ENCODE measurements at regions of chr5 and their contacts with region 1.

Region 1: DNA sequence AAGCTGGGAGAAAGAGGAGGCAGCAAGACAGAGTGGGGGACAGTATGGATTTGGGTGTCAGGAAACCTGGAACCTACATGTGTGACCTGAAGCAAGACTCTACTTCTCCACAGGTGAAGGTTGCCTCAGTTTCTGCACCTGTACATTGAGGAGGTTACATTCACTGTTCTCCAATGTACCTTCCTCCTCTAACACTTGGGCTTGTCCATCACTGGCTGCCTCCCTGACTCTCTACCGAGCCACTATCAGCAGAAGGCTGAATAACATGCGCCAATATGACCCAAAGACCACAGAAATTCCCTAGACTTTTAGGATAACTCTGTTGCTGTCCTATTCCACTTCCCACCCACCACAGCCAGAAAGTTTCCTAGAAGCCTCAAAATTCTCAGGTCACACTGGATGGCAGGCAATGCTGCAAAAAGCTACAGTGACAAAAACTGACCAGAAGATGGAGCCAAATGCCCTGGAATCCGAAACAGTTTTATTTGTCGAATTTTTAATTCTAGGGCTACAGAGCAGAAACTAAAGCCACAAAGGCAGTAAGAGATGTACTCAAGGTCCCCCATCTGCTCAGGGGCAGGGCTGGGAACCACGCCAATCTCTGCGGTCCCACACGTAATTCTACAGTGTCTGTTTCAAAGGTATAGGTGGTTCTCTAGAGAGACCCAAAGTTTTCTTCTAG is 64.4 kb downstream of the FAM114A2 start:
- H3K4me3 ChIP-seq: no peak overlapping the region
- H3K27ac ChIP-seq: no peak overlapping the region
- H3K4me1 ChIP-seq: no peaks in the 10 kb centered on the region
- CTCF ChIP-seq: peak; percentile 37; the same call in 1 of the 2 replicates

Region 2: DNA sequence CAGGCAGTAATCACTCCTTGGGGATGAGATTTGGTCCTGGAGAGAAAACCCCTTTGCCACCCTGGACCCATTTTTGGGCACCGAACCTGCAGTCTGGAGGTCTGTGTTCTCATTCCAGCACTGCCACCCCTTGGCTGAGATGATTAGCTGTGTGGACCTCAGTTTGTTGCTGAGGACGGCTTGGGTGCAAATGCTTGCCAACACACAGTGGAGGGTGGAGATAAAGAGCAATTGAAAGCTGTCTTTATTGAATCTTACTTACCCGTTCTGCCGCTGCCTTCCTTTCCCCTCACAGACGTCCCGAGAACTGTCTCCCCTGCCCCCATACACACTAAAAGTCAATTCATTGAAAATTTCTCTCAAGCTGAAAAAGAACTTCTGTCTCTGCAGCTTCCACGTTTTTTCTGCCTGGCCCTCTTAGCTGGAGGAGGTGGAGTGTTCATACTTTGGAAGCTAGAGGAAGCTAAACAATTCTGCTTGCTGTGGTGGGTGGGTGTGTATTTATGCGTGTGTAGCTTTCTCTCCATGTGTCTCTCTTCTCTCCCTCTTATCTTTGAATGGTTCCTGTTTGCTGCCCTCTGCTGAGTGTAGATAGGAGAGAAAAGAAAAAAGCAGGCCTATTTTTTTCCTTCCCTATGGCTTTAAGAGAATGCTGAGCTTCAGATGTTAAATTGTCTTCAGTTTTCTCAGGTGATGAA is 222.8 kb after region 1 on chr5:
- CTCF ChIA-PET with region 1: interaction called, 12 read pairs
- POLR2A ChIA-PET with region 1: no interaction called
- H3K4me3 ChIP-seq: no peak overlapping the region
- H3K27ac ChIP-seq: no peak overlapping the region
- H3K4me1 ChIP-seq: peaks cover 7% of the 10 kb centered on the region; the same call in 1 of the 2 replicates
- CTCF ChIP-seq: peak; percentile 63

Measured in HEK293 (cell line).